MCF 10A (cell line): ENCODE measurements at regions of chr17 and their contacts with region 1.

Region 1: GRCh38 chr17:50151041-50151936 is 812 bp upstream of the PPP1R9B start:
- DNase-seq: peak; percentile 92
- H3K4me3 Mint-ChIP-seq: peak overlapping the region; percentile 82
- H3K27ac Mint-ChIP-seq: peak overlapping the region; percentile 80
- H3K4me1 Mint-ChIP-seq: peaks cover 26% of the 10 kb centered on the region
- H3K27me3 Mint-ChIP-seq: no peaks in the 10 kb centered on the region
- CTCF ChIP-seq: peak; percentile 52

Region 2: DNA sequence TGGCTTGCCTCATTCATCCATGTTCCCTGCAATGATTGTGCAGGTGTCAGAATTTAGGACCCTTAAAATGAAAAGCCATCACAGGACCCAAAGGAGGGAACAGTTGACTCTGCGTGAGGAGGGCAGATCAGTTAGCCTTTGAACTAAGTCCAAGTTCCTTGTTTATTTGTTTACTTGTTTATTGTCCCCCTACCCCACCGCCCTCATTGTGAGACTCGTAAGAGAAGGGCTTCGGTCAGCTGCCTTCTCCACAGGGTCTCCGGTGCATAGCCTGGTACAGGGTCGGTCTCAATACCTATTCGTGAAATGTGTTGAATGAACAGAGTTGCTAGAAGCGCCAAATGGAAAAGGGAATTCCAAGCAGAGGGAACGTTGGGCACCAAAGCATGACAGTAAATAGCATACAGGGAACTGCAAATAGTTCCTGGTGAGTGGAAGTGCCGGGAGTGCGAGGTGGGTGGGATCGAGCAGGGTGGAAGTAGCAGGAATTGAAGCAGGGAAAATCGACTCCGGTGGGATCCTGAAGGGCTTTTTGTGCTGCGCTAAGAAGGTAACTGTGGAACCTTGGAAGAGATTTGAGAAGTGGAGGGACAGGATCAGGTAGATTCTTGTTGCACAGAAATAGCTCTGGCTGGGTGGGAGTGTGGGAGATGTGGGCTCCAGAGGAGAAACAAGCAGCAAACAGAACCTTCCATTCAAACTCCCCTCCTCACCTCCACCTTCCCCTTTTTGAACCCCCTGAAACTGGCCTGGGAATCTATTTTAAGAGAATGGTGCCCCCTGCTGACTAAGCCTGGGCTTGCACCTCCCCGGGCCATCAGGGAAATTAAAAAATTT is 456.2 kb before region 1 on chr17:
- CTCF ChIA-PET with region 1: no interaction called
- POLR2A ChIA-PET with region 1: no interaction called
- intact Hi-C with region 1: no loop called
- DNase-seq: peak; percentile 30
- H3K4me3 Mint-ChIP-seq: no peak overlapping the region
- H3K27ac Mint-ChIP-seq: no peak overlapping the region
- H3K4me1 Mint-ChIP-seq: no peaks in the 10 kb centered on the region
- H3K27me3 Mint-ChIP-seq: no peaks in the 10 kb centered on the region
- CTCF ChIP-seq: peak; percentile 92

Region 3: GRCh38 chr17:49952209-49952911 is 198.9 kb before region 1 on chr17:
- CTCF ChIA-PET with region 1: no interaction called
- POLR2A ChIA-PET with region 1: no interaction called
- intact Hi-C with region 1: no loop called
- DNase-seq: peak; percentile 86
- H3K4me3 Mint-ChIP-seq: no peak overlapping the region
- H3K27ac Mint-ChIP-seq: no peak overlapping the region
- H3K4me1 Mint-ChIP-seq: peaks cover 5% of the 10 kb centered on the region
- H3K27me3 Mint-ChIP-seq: peaks cover 44% of the 10 kb centered on the region
- CTCF ChIP-seq: peak; percentile 80

Region 4: DNA sequence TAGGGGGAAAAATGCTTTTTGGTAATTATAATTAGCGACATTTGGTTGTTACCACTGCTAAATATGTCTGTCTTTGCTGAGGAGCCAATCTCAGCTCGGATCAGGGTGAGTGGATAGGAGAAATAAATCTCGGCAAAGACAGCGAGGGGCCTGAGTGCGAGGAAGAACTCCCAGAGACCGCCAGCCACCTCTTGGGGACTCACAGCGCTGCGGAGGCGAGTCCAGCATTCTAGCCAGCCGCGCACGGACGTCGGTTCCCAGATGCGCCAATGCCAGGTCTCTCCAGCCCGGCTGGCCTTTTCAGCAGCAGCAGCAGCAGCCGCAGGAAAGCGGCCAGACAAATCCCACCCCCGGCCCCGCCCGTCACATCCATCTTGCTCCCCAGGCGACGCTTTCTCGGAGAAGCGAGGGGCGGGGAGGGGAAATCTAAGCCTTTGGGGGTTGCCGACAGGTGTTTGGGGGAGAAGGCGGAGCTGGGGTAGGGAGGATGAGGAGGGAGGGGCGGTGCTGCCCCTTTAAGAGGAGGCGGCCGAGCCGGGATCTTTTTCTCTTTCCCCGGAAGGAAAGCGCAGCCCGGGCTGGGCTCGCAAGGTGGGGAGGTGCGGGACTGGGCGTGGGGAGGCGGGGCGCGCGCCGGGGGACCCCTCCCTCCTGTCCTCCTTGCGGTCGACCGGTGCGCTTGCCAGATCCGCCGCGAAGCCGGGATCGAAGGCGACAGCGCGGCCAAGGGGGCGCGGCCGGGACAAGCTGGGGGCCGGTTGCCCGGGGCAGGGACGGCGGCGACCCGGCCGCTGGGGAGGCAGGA is 95.7 kb before region 1 on chr17 and contains the start of gene ITGA3:
- CTCF ChIA-PET with region 1: interaction called, 4 read pairs
- POLR2A ChIA-PET with region 1: interaction called, 25 read pairs
- intact Hi-C with region 1: no loop called
- DNase-seq: peak; percentile 98
- H3K4me3 Mint-ChIP-seq: peak within 1 kb of the TSS; percentile 80
- H3K27ac Mint-ChIP-seq: peak within 1 kb of the TSS; percentile 95
- H3K4me1 Mint-ChIP-seq: peaks cover 64% of the 10 kb centered on the region
- H3K27me3 Mint-ChIP-seq: no peaks in the 10 kb centered on the region
- CTCF ChIP-seq: no peak
- total RNA-seq, gene ITGA3: 588 and 717 TPM in 2 replicates

Region 5: GRCh38 chr17:50079334-50080095 is 71.8 kb before region 1 on chr17:
- CTCF ChIA-PET with region 1: no interaction called
- POLR2A ChIA-PET with region 1: no interaction called
- intact Hi-C with region 1: no loop called
- DNase-seq: peak; percentile 74
- H3K4me3 Mint-ChIP-seq: no peak overlapping the region
- H3K27ac Mint-ChIP-seq: peak overlapping the region; percentile 43
- H3K4me1 Mint-ChIP-seq: peaks cover 12% of the 10 kb centered on the region
- H3K27me3 Mint-ChIP-seq: no peaks in the 10 kb centered on the region
- CTCF ChIP-seq: peak; percentile 54

Region 6: DNA sequence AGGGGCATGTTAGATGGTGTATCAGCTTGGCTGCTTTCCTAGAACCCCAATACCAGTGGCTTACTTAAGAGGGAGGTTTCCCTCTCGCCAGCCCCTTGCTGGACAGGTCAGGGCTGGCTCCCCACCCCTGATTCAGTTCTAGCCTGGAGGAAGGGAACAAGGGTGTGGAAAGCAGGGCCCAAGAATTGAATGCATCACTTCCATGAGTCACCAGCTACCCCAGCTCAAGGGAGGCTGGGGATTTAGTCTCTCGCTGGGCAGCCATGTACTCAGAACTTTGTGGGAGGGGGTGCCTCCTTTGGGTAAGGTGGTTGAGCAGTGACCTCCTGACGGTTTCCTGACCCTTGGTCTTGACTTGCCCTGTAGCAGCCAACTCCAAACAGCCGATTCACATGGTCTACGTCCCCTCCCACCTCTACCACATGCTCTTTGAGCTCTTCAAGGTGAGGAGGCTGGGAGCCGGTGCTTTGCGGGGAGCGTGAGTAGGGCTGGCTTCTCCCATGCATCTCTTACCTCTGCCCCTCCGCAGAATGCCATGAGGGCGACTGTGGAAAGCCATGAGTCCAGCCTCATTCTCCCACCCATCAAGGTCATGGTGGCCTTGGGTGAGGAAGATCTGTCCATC is 43.4 kb before region 1 on chr17:
- CTCF ChIA-PET with region 1: interaction called, 3 read pairs
- POLR2A ChIA-PET with region 1: interaction called, 14 read pairs
- intact Hi-C with region 1: no loop called
- DNase-seq: peak; percentile 87
- H3K4me3 Mint-ChIP-seq: no peak overlapping the region
- H3K27ac Mint-ChIP-seq: peak overlapping the region; percentile 39
- H3K4me1 Mint-ChIP-seq: peaks cover 23% of the 10 kb centered on the region
- H3K27me3 Mint-ChIP-seq: no peaks in the 10 kb centered on the region
- CTCF ChIP-seq: no peak

Region 7: DNA sequence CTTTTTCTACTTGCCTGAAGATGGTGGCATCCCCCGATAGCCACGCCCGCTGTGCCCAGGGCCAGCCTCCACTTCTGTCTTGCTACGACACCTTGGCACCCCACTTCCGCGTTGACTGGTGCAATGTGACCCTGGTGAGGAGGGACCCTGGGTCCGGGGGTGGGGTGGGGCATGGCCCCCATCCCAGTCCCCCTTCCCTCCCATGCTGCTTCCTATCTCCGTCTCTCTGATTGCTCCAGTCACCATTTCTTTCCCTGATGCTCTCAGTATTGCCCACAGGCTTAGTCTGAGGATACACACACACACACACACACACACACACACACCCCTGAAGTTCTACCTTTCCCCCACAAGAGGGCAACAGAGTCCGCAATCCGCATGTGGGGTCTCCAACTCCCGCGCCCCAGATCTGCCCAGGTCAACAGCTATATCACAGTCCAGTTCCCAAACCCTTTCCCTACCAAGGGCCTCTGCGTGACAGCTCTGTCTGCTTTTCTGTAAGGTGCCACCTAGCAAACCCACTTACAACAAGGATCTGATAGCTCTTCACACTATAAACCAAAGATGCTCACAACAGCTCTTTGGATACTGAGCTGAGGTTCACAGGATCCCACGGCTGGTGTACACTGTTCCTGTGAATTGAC is 18.0 kb after region 1 on chr17:
- CTCF ChIA-PET with region 1: interaction called, 12 read pairs
- POLR2A ChIA-PET with region 1: interaction called, 9 read pairs
- intact Hi-C with region 1: no loop called
- DNase-seq: peak; percentile 68
- H3K4me3 Mint-ChIP-seq: no peak overlapping the region
- H3K27ac Mint-ChIP-seq: no peak overlapping the region
- H3K4me1 Mint-ChIP-seq: peaks cover 21% of the 10 kb centered on the region
- H3K27me3 Mint-ChIP-seq: no peaks in the 10 kb centered on the region
- CTCF ChIP-seq: peak; percentile 69